ENCODE measurements at regions of chr12 and their contacts with region 1.

Region 1: GRCh38 chr12:51172515-51173431 is at the start of gene TFCP2:
- DNase-seq: peak; percentile 82
- ATAC-seq: peak; percentile 95
- H3K4me3 ChIP-seq: peak within 1 kb of the TSS; percentile 97
- H3K27ac ChIP-seq: peak within 1 kb of the TSS; percentile 95
- H3K4me1 ChIP-seq: peaks cover 3% of the 10 kb centered on the region; the same call in 1 of the 2 replicates
- H3K27me3 ChIP-seq: no peaks in the 10 kb centered on the region
- CTCF ChIP-seq: no peak
- EP300 ChIP-seq: 0 out of 4 replicates have a peak, but pooled peaks of 1 of the 2 experiments have one; percentile 16
- POLR2A ChIP-seq: peak; percentile 82
- RAD21 ChIP-seq: no peak
- polyA plus RNA-seq, gene TFCP2: 5.8 to 9.4 TPM

Region 2: DNA sequence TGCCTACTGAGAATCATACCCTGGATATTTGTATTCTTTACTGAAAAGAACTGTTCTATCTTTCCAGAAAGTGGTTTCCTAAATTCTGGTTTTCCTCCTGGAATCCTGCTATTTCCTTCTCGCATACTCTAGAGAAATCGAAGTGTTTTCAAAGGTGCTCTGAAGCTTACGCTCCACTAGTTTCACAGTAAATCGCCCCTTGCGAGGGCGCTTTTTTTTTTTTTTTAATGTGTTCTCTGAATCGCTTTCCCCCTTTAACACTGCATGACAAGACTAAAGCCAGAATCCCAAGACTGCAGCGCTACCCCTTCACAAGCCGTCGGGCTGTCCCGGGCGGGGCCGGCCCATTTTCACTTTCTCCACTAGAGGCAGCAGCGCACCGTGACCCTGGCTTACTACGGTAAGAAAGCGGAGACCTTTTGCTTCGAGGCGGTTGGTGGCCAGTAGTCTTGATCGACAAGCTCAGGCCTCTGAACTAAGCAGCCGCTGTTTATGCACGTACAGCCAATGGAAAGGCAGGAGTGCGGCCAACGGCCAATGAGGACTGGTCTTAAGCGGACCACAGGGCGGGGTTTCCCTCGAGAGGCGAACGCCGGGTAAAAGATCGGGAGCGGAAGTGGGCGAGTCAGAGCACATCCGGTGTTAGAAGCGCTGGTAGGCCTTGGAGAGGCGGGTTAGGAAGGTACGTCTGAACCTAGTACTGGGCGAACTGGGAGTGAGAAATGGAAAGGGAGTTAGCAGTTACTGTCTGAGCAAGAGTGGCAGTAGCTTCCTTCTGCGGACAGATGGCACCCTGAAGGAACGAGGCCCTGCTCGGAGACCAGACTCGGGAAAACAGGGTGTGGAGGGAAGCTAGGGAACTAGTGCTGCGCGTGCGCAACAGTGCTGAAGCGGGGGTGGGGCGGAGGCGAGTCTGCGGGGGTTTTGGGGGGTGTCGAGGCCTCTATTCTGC is 1431.6 kb before region 1 on chr12 and contains the start of gene TMBIM6:
- CTCF ChIA-PET with region 1: no interaction called
- POLR2A ChIA-PET with region 1: no interaction called
- RAD21 ChIA-PET with region 1: no interaction called
- SMC1A ChIA-PET with region 1: no interaction called
- in situ Hi-C with region 1: no loop called
- intact Hi-C with region 1: no loop called
- DNase-seq: peak; percentile 99
- ATAC-seq: peak; percentile 96
- H3K4me3 ChIP-seq: peak within 1 kb of the TSS; percentile 77
- H3K27ac ChIP-seq: peak within 1 kb of the TSS; percentile 96
- H3K4me1 ChIP-seq: 0 out of 2 replicates have a peak, but pooled peaks cover 2% of the 10 kb centered on the region
- H3K27me3 ChIP-seq: no peaks in the 10 kb centered on the region
- CTCF ChIP-seq: peak; percentile 91 to 99 (median 98)
- EP300 ChIP-seq: no peak
- POLR2A ChIP-seq: peak; percentile 98
- RAD21 ChIP-seq: peak; percentile 80
- polyA plus RNA-seq, gene TMBIM6: 853 to 1,192 TPM

Region 3: DNA sequence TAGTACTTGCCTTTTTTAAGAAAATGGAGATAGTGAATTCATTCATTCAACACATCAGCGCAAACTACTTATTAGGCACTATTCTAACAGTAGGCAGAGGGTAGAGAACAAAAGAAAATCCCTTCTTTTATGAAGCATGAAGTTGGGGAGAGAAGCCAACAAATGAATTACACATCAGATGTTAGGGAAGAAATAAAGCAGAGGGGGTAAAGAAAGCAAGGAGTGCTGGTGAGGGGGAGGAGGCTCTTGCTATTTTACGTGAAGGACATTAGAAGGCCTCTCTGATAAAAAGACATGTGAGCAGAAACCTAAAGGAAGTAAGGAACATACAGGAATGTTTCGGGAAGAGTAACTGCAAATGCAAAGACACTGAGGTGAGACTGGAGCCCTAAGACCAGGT is 22.0 kb before region 1 on chr12:
- CTCF ChIA-PET with region 1: no interaction called
- POLR2A ChIA-PET with region 1: no interaction called
- RAD21 ChIA-PET with region 1: no interaction called
- SMC1A ChIA-PET with region 1: no interaction called
- in situ Hi-C with region 1: no loop called
- intact Hi-C with region 1: no loop called
- DNase-seq: no peak
- ATAC-seq: no peak
- H3K4me3 ChIP-seq: no peak overlapping the region
- H3K27ac ChIP-seq: no peak overlapping the region
- H3K4me1 ChIP-seq: no peaks in the 10 kb centered on the region
- H3K27me3 ChIP-seq: no peaks in the 10 kb centered on the region
- CTCF ChIP-seq: no peak
- EP300 ChIP-seq: no peak
- POLR2A ChIP-seq: no peak
- RAD21 ChIP-seq: no peak

Region 4: DNA sequence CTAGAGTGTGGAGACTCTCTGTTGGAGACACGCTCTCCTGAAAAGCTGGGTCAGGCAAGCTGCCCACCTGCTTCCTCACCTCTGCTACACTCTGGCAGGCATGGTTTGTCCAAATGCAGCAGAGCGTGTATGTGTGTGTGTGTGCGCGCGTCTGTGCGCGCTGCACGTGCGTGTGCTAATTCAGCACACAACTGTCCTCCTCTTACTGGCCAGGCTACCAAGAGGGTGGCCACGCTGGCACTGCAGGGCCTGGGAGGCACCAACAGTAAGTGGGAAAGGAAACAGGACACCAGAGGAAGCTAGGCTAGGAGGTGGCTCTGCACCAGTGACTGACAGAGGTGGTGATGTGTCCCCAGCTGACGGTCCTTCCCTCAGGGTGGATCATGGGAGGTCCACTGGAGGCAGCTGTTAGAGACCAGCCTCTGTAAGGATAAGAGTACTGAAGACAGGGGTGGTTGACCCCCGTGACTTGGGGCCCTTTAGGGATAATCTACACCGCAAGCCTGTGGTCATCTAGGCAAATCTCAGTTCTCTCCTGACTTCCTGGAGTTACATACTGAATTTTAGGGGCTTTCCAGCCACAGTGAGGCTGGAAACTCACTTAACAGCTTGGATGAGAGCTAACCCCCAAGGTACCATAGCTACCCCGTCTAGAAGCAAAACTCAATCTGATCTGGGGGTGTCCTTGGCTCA is 15.7 kb after region 1 on chr12:
- CTCF ChIA-PET with region 1: interaction called, 5 read pairs
- POLR2A ChIA-PET with region 1: interaction called, 10 read pairs
- RAD21 ChIA-PET with region 1: interaction called, 3 read pairs
- SMC1A ChIA-PET with region 1: interaction called, 11 read pairs
- in situ Hi-C with region 1: no loop called
- intact Hi-C with region 1: no loop called
- DNase-seq: peak; percentile 60
- ATAC-seq: peak; percentile 86
- H3K4me3 ChIP-seq: 0 out of 2 replicates have a peak overlapping the region, but pooled peaks have one; percentile 17
- H3K27ac ChIP-seq: peak overlapping the region; percentile 70
- H3K4me1 ChIP-seq: peaks cover 31% of the 10 kb centered on the region
- H3K27me3 ChIP-seq: no peaks in the 10 kb centered on the region
- CTCF ChIP-seq: no peak
- EP300 ChIP-seq: peak; percentile 32 to 43; a peak in 1 of 4 replicates
- POLR2A ChIP-seq: no peak
- RAD21 ChIP-seq: no peak

Region 5: DNA sequence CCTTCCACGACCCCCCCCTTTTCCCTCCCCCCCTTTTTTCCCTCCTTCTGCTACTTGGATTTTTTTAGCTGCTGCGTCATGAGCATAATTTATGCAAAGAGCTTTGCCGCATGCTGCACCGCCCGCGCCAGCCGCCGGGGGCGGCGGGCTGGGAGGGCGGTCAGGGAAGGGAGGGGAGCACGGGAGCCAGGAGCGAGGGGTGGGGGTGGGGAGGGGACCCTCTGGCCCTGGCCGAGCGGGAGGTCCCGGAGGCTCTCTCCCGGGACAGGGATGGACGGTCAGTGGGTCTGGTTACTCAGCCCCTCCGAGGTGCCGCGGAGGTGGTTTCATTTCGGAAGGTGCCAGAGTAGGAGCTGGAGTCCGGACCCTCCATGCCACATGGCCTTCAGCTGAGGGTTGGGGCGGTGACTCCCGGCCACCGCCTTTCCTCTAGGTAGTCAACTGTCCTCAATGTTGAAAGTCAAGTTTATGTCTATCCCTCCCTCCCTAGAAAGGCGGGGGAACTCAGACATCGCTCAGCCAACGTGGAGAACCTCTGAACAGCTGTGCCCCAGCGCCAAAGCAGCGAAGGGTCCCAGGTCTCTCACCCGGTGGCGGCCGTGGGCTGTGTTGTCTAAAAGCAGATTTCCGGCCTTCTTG is 45.3 kb after region 1 on chr12 and contains the start of gene POU6F1:
- CTCF ChIA-PET with region 1: interaction called, 4 read pairs
- POLR2A ChIA-PET with region 1: no interaction called
- RAD21 ChIA-PET with region 1: interaction called, 4 read pairs
- SMC1A ChIA-PET with region 1: interaction called, 3 read pairs
- in situ Hi-C with region 1: no loop called
- intact Hi-C with region 1: loop called (anchors 2 kb)
- DNase-seq: peak; percentile 25
- ATAC-seq: peak; percentile 90
- H3K4me3 ChIP-seq: peak within 1 kb of the TSS; percentile 77
- H3K27ac ChIP-seq: peak within 1 kb of the TSS; percentile 62
- H3K4me1 ChIP-seq: peaks cover 4% of the 10 kb centered on the region; the same call in 1 of the 2 replicates
- H3K27me3 ChIP-seq: no peaks in the 10 kb centered on the region
- CTCF ChIP-seq: peak; percentile 43 to 73 (median 44); a peak in 5 of 6 replicates
- EP300 ChIP-seq: no peak
- POLR2A ChIP-seq: peak; percentile 75
- RAD21 ChIP-seq: peak; percentile 30; the same call in 1 of the 2 replicates
- polyA plus RNA-seq, gene POU6F1: 0.26 to 0.31 TPM